MCF 10A (cell line): ENCODE measurements at regions of chr9 and their contacts with region 1.

Region 1: DNA sequence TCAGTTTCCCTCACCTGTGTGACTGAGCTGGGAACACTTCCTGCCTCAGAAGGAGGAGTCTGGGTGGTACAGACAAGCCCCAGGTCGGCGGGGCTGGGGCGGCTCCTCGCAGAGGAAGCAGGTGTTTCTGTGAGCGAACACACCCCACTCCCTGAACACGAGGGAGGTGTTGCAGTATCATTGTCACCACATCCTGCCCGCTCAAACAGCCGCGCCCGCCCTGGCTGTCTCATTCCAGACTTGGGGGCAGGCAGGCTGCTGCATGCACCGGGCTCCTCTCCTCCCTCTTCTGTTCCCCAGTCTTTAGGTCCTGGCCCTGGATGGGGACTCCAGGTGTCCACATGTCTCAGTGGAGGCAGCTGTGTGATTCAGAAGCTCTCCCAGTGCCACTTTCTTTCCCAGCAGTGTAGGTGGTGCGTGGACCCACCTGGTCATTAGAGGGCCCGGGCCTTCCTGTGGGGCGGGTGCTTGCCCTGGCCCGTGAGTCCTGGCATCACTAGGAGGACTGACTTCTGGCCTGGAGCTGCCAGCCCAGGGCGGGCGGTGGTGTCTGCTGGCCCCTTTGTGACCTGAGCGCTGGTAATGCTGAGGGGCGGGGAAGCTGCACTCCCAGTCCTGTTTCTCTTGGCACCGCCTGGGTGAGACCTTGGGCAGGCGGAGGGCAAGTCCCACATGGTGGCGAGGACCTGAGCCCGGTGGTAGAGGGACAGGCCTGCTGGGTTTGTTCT is 18.3 kb upstream of the PHYHD1 start:
- DNase-seq: peak; percentile 72
- H3K4me3 Mint-ChIP-seq: peak overlapping the region; percentile 40
- H3K27ac Mint-ChIP-seq: peak overlapping the region; percentile 75
- H3K4me1 Mint-ChIP-seq: peaks cover 28% of the 10 kb centered on the region
- H3K27me3 Mint-ChIP-seq: no peaks in the 10 kb centered on the region
- CTCF ChIP-seq: no peak

Region 2: GRCh38 chr9:128881901-128882681 is 20.4 kb before region 1 on chr9 and contains the starts of genes KYAT1 and LRRC8A:
- CTCF ChIA-PET with region 1: interaction called, 3 read pairs
- POLR2A ChIA-PET with region 1: interaction called, 26 read pairs
- intact Hi-C with region 1: no loop called
- DNase-seq: peak; percentile 96
- H3K4me3 Mint-ChIP-seq: peak within 1 kb of the TSS; percentile 99
- H3K27ac Mint-ChIP-seq: peak within 1 kb of the TSS; percentile 95
- H3K4me1 Mint-ChIP-seq: peaks cover 40% of the 10 kb centered on the region
- H3K27me3 Mint-ChIP-seq: no peaks in the 10 kb centered on the region
- CTCF ChIP-seq: no peak
- total RNA-seq, gene KYAT1: 3.8 and 5.7 TPM in 2 replicates
- total RNA-seq, gene LRRC8A: 30.9 and 31.6 TPM in 2 replicates